ENCODE measurements at regions of chr2 and their contacts with region 1.

Region 1: DNA sequence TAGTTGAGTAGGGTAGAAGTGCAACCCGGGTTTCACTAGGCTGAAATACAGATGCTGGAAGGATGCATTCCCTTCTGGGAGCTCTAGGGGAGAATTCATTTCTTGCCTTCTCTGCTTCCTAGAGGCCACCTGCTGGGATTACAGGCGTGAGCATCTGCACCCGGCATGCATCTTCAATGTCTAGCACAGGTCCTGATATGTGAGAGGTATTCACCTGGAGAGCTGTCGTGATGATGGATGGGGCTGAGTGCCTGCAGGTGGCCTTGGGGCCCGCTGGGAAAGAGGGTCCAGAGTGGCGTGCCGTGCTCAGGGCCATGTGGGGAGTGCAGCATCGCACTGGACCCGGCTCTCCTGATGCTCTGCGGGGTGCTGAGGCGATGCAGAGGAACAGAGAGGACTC is 6.6 kb upstream of the NTSR2 start:
- DNase-seq: no peak
- ATAC-seq: no peak
- H3K4me3 Mint-ChIP-seq: no peak overlapping the region
- H3K27ac Mint-ChIP-seq: no peak overlapping the region
- H3K4me1 Mint-ChIP-seq: peaks cover 41% of the 10 kb centered on the region
- H3K27me3 Mint-ChIP-seq: no peaks in the 10 kb centered on the region
- CTCF ChIP-seq: no peak

Region 2: DNA sequence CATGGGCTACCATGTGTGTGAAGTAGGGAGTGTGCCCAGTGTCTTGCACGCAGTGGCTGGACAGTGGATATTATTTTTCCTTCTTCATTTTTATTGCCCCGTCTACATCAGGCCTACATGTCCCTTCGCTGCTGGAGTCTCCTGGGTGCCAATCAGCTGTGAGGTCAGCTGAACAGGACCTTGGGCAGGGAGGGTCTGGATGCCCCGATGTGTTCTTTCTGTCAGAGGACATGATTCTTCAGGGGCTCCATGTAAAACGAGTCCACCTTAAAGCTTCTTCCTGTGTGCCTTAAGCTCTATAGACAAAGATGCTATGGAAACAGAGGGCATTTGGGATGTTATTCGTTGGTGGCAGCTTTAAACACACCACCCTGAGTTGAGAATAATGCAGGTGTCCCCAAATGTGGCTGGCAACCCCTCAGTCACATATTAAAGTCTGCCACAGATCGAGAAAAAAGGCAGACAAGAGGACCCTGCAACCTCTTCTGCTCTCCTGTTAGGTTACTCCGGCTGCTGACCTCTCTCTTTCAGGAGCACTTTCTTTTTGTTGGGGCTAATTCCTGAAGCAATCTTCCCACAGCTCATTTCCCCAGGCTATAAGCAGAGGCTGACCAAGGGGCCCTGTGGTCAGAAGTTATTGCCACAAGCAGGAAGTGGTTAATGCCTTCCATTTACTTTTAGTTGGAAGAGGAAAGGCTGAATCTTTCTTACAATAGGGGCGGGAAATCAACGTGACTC is 122.8 kb before region 1 on chr2:
- CTCF ChIA-PET with region 1: no interaction called
- POLR2A ChIA-PET with region 1: no interaction called
- DNase-seq: no peak
- ATAC-seq: no peak
- H3K4me3 Mint-ChIP-seq: no peak overlapping the region
- H3K27ac Mint-ChIP-seq: no peak overlapping the region; the same call in 1 of the 2 replicates
- H3K4me1 Mint-ChIP-seq: peaks cover 60% of the 10 kb centered on the region
- H3K27me3 Mint-ChIP-seq: no peaks in the 10 kb centered on the region
- CTCF ChIP-seq: no peak

Region 3: GRCh38 chr2:11642974-11643373 is 33.7 kb before region 1 on chr2:
- CTCF ChIA-PET with region 1: interaction called, 12 read pairs
- POLR2A ChIA-PET with region 1: no interaction called
- DNase-seq: peak; percentile 22
- ATAC-seq: peak; percentile 77
- H3K4me3 Mint-ChIP-seq: no peak overlapping the region
- H3K27ac Mint-ChIP-seq: no peak overlapping the region
- H3K4me1 Mint-ChIP-seq: no peaks in the 10 kb centered on the region
- H3K27me3 Mint-ChIP-seq: no peaks in the 10 kb centered on the region
- CTCF ChIP-seq: no peak